Activated B cell treated with CpG ODN at 0.5 μM for 24 hours (primary cell): ENCODE measurements at regions of chr7 and their contacts with region 1.

Region 1: GRCh38 chr7:90816511-90817142 is 220.5 kb downstream of the CDK14 start:
- DNase-seq: no peak
- ATAC-seq: peak; percentile 94
- H3K4me3 Mint-ChIP-seq: peak overlapping the region; percentile 72
- H3K27ac Mint-ChIP-seq: peak overlapping the region; percentile 90
- H3K4me1 Mint-ChIP-seq: peaks cover 38% of the 10 kb centered on the region
- H3K27me3 Mint-ChIP-seq: no peaks in the 10 kb centered on the region
- CTCF ChIP-seq: no peak

Region 2: GRCh38 chr7:90503379-90503778 is 313.2 kb before region 1 on chr7:
- CTCF ChIA-PET with region 1: no interaction called
- POLR2A ChIA-PET with region 1: no interaction called
- intact Hi-C with region 1: no loop called
- DNase-seq: no peak
- ATAC-seq: no peak
- H3K4me3 Mint-ChIP-seq: no peak overlapping the region
- H3K27ac Mint-ChIP-seq: no peak overlapping the region
- H3K4me1 Mint-ChIP-seq: no peaks in the 10 kb centered on the region
- H3K27me3 Mint-ChIP-seq: peaks cover 2% of the 10 kb centered on the region
- CTCF ChIP-seq: no peak

Region 3: DNA sequence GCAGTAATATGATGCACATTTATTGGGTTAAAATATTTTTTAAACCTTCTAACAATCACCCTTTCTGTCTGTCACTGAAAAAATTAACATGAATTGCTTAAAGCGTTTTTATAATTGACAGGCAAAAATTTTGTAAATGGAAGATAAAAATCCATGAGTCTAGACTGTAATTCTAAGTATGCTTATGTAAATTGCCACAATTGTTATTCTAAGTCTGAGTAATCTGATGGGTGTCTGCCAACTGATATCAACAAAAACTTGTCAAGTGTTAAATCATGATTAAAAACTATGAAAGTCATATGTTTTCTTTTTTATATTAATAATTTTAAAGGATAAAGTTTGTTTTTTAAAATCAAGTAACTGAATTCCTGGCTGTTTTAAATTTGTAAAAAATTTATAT is 12.3 kb before region 1 on chr7:
- CTCF ChIA-PET with region 1: no interaction called
- POLR2A ChIA-PET with region 1: no interaction called
- intact Hi-C with region 1: loop called (anchors 2 kb)
- DNase-seq: no peak
- ATAC-seq: no peak
- H3K4me3 Mint-ChIP-seq: no peak overlapping the region
- H3K27ac Mint-ChIP-seq: no peak overlapping the region
- H3K4me1 Mint-ChIP-seq: peaks cover 7% of the 10 kb centered on the region
- H3K27me3 Mint-ChIP-seq: no peaks in the 10 kb centered on the region
- CTCF ChIP-seq: no peak

Region 4: DNA sequence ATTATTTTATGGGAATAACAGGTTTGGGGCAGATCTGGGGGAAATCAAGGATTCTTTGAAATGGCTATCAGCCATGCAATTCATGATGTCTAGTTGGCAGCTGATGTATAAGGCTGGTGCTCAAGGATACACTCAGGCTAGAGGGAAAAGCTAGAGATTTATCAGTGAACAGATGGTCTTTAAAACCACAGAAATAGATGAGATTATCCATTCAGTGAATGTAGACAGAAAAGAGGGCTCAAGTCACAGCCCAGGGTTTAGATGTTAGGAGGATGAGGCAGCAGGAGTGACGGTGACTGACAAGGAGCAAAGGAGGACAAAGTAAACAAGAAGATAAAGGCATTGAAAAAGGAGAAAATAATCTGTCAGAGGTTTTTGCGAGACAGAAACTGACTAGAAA is 18.1 kb after region 1 on chr7:
- CTCF ChIA-PET with region 1: no interaction called
- POLR2A ChIA-PET with region 1: no interaction called
- intact Hi-C with region 1: loop called (anchors 2 kb)
- DNase-seq: no peak
- ATAC-seq: no peak
- H3K4me3 Mint-ChIP-seq: no peak overlapping the region
- H3K27ac Mint-ChIP-seq: no peak overlapping the region
- H3K4me1 Mint-ChIP-seq: peaks cover 31% of the 10 kb centered on the region
- H3K27me3 Mint-ChIP-seq: no peaks in the 10 kb centered on the region
- CTCF ChIP-seq: no peak